Motor neuron (in vitro differentiated cells): ENCODE measurements at regions of chr2 and their contacts with region 1.

Region 1: DNA sequence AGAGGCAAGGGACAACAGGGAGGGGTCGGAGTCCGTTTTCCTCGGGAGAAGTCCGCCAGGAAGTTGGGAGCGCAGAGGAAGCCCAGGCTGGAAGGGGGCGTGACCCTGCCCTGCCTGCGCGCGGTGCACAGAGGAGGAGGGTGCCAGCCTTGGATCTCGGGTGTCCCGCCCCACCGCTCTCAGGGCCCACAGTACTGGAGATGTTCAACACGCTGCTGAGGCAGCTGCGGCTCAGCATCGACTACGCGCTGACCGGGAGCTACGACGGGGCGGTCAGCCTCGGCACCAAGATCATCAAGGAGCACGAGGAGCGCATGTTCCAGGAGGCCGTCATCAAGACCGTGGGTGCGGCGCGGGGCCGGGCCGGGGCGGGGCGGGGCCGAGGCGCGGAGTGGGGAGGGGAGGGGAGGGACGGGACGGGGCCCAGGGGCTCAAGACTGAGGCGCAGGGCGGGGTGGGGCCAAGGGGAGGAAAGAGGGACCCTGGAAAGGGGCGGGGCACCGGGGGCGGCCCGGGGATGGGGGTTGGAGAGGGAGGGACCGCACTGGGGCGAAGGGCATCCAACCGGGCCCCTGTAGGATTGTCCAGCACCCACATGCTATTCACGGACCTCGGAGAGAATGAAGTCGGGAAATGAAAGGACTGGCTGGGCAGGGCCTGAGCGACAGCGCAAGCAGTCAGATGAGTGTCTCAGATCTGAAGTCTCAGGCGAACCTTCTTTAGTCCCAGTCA is 36.6 kb downstream of the POMC start:
- ATAC-seq: peak in 7 of 8 experiments; percentile 14 to 84 (median 59)
- H3K4me3 ChIP-seq: no peak overlapping the region
- H3K27ac ChIP-seq: no peak overlapping the region
- H3K4me1 ChIP-seq: peaks cover 0 to 7% of the 10 kb centered on the region in 2 donors

Region 2: GRCh38 chr2:24779116-24779515 is 352.6 kb before region 1 on chr2:
- in situ Hi-C with region 1: no loop called
- ATAC-seq: no peak
- H3K4me3 ChIP-seq: no peak overlapping the region
- H3K27ac ChIP-seq: no peak overlapping the region
- H3K4me1 ChIP-seq: no peaks in the 10 kb centered on the region

Region 3: DNA sequence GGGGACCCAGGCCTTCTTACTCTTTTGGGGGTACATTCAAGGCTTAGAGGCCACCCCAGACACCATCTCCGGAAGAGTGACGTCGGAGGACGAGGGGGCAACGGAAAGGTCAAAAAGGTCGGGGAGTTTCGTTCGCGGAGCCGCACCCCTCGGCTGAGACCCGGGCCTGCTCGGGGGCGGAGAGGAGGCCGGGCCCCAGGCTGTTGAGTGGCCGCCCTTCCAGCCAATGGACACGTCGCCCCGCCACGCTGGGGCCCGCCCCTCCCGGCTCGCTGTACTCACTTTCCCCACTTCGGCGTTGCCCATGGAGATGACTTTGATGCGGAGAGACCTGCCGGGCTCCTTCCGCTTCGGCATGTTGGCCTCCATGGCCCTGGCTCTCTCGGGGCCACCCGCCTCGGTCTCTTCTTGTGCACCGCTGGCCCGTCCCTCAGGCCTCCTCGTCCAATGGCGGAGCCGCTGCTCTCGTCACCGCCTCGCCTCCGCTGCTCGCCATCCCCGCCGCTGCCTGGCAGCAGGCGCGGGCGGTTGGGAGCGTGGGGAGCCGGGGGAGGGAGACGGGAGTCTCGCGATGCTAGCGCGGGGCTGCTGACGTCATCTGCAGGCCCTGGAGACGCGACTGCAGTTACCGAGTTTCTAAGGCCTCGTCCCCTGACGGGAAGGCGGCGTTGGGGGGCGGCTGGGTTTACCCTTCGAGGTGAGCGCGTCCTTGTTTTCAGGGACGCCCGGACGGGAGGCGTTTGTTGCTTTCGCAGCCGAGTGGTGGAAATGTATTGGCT is 160.0 kb before region 1 on chr2 and contains the start of gene DNAJC27:
- in situ Hi-C with region 1: loop called in 2 of 9 experiments (anchors 10 to 25 kb)
- ATAC-seq: peak; percentile 87 to 96 (median 95)
- H3K4me3 ChIP-seq: peak within 1 kb of the TSS; percentile 55 to 85 (median 75)
- H3K27ac ChIP-seq: peak within 1 kb of the TSS; percentile 97 to 99
- H3K4me1 ChIP-seq: peaks cover 4 to 8% of the 10 kb centered on the region in 2 donors
- total RNA-seq, gene DNAJC27: 5.2 to 12.5 (median 8.1) TPM